GM12878 (cell line): ENCODE measurements at regions of chr2 and their contacts with region 1.

Region 1: DNA sequence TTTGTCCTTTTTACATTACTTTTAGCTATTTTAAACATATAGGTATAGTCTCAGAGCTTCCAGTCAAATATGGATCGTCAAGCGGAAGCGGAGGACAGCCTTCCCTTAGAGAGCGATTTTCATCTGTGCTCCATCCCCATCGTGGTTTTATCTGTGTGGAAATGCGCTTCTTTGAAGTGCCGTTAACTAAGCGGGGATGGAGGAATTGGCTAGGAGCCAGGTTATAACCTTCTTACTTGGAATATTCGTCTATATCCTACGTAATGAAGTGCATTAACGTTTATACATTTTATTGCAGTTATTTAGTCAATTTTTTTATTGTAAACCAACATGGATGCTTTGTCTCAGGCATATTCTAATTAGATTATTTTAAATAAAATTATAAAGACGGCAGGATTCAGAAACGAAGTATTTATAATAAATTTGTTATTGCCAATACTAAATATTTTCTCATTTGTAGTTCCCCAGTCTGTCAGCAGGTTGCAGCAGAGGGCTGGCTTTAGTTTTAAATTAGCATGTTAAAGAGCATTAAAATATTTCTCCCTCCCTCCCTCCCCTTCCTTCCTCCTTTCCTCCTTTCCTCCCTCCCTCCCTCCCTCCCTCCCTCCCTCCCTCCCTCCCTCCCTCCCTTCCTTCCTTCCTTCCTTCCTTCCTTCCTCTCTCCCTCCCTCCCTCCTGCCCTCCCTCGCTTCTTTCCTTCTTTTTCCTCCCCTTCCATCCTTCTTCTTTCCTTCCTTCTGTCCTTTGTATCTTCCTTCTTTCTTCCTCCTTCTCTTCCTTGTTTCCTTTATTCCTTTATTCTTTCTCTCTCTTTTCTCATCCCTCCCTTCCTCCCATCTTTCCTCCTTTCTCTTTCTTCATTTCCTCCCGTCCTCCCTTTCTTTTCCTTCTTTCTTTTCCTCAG is 80.6 kb upstream of the DOCK10 start:
- DNase-seq: no peak
- ATAC-seq: peak; percentile 59
- H3K4me3 ChIP-seq: no peak overlapping the region
- H3K27ac ChIP-seq: no peak overlapping the region
- H3K4me1 ChIP-seq: no peaks in the 10 kb centered on the region
- H3K27me3 ChIP-seq: no peaks in the 10 kb centered on the region; a peak in 1 of 4 replicates
- CTCF ChIP-seq: peak; percentile 42 to 63 (median 57); a peak in 5 of 6 replicates
- EP300 ChIP-seq: no peak
- POLR2A ChIP-seq: no peak
- RAD21 ChIP-seq: peak; percentile 77

Region 2: DNA sequence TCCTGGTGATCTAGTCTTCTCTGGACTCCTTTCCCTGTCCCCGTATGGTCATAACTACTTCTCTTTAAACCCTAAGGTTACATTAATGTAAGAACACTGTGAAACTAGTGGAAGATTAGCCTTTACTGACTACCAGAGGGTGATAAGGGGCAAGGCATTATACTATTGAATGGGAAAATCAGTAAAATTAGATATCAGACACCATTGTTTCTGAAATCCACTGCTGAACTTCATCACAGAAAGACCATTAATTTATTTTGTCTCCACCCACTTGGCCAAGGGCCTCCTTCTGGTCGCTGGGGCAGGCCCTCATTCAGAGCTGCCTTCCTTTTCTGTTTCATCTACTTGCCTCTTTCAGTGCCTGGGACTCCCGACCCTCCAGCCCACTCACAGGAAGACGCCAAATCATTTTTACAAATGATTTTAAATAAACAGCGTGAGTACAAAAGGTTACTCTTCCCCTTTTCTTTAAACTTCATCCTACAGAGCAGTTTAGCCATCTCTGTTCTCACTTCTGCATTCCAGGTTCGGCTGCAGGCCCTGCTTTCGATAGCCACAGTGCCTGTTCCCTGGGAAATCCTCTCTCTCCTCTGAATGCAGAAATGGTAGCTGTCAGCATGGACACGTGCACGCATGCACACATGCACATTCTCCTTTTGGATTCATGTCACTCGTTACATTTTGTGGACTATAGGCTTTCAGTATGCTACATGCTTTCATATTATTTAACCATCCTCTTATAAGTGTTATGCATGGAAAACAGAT is 10.3 kb before region 1 on chr2:
- CTCF ChIA-PET with region 1: interaction called, 15 read pairs
- POLR2A ChIA-PET with region 1: no interaction called
- RAD21 ChIA-PET with region 1: no interaction called
- SMC1A ChIA-PET with region 1: interaction called, 5 read pairs
- in situ Hi-C with region 1: no loop called
- intact Hi-C with region 1: no loop called
- DNase-seq: peak; percentile 13
- ATAC-seq: peak; percentile 86
- H3K4me3 ChIP-seq: no peak overlapping the region
- H3K27ac ChIP-seq: no peak overlapping the region
- H3K4me1 ChIP-seq: peaks cover 9% of the 10 kb centered on the region
- H3K27me3 ChIP-seq: no peaks in the 10 kb centered on the region
- CTCF ChIP-seq: no peak
- EP300 ChIP-seq: 0 out of 4 replicates have a peak, but pooled peaks of 1 of the 2 experiments have one; percentile 22
- POLR2A ChIP-seq: no peak
- RAD21 ChIP-seq: no peak

Region 3: GRCh38 chr2:225182126-225182525 is 59.3 kb after region 1 on chr2:
- CTCF ChIA-PET with region 1: no interaction called
- POLR2A ChIA-PET with region 1: no interaction called
- RAD21 ChIA-PET with region 1: no interaction called
- SMC1A ChIA-PET with region 1: no interaction called
- in situ Hi-C with region 1: no loop called
- intact Hi-C with region 1: no loop called
- DNase-seq: no peak
- ATAC-seq: no peak
- H3K4me3 ChIP-seq: no peak overlapping the region
- H3K27ac ChIP-seq: no peak overlapping the region
- H3K4me1 ChIP-seq: no peaks in the 10 kb centered on the region
- H3K27me3 ChIP-seq: no peaks in the 10 kb centered on the region
- CTCF ChIP-seq: no peak
- EP300 ChIP-seq: no peak
- POLR2A ChIP-seq: no peak
- RAD21 ChIP-seq: no peak

Region 4: GRCh38 chr2:225411452-225411851 is 288.6 kb after region 1 on chr2:
- CTCF ChIA-PET with region 1: interaction called, 3 read pairs
- POLR2A ChIA-PET with region 1: no interaction called
- RAD21 ChIA-PET with region 1: no interaction called
- SMC1A ChIA-PET with region 1: interaction called, 3 read pairs
- in situ Hi-C with region 1: no loop called
- intact Hi-C with region 1: loop called (anchors 5 kb)
- DNase-seq: no peak
- ATAC-seq: no peak
- H3K4me3 ChIP-seq: no peak overlapping the region
- H3K27ac ChIP-seq: no peak overlapping the region
- H3K4me1 ChIP-seq: no peaks in the 10 kb centered on the region
- H3K27me3 ChIP-seq: no peaks in the 10 kb centered on the region; a peak in 1 of 4 replicates
- CTCF ChIP-seq: no peak
- EP300 ChIP-seq: no peak
- POLR2A ChIP-seq: no peak
- RAD21 ChIP-seq: no peak

Region 5: GRCh38 chr2:225494100-225494459 is 371.2 kb after region 1 on chr2:
- CTCF ChIA-PET with region 1: interaction called, 3 read pairs
- POLR2A ChIA-PET with region 1: no interaction called
- RAD21 ChIA-PET with region 1: no interaction called
- SMC1A ChIA-PET with region 1: no interaction called
- in situ Hi-C with region 1: no loop called
- intact Hi-C with region 1: loop called (anchors 10 kb)
- DNase-seq: no peak
- ATAC-seq: no peak
- H3K4me3 ChIP-seq: no peak overlapping the region
- H3K27ac ChIP-seq: no peak overlapping the region
- H3K4me1 ChIP-seq: no peaks in the 10 kb centered on the region
- H3K27me3 ChIP-seq: no peaks in the 10 kb centered on the region
- CTCF ChIP-seq: no peak
- EP300 ChIP-seq: no peak
- POLR2A ChIP-seq: no peak
- RAD21 ChIP-seq: no peak

Region 6: DNA sequence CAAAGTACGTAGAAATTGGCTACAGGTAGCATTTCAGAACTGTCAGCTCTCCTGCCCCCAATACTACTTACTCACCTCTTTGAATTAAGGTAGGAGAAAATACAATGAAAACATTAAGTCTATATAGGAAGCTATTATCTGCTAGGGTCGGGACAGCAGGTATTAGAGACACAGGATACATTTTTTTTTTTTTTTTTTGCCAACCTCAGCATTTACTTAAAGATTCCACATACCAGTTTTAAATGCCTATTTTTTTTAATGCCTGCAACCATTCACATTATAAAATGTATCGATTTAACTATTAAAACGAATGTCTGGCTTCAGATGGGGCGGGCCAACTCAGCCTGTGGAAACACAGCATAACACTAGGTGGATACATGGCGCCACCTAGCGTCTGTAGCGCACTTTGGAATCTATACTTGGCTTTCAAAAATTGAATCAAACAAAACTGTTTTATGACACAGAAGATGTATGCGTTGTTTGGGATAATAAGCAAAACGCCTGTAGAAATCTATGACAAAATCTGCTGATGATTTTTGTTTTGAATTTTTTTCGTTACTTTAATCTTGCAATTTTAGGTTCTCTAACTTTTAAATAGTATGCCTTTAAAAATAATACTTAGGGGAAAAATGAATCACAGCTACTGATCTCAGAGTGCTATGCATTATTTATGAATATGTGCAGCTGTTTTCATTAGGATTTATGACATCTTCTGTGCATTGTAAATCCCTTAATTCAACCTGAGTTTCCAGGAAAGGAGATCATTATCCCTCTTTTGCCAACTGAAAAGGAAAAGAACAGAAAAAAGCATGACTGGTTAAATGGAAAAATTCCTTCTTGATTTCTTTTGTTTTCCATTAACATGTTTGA is 537.7 kb after region 1 on chr2:
- CTCF ChIA-PET with region 1: interaction called, 59 read pairs
- POLR2A ChIA-PET with region 1: no interaction called
- RAD21 ChIA-PET with region 1: interaction called, 5 read pairs
- SMC1A ChIA-PET with region 1: interaction called, 28 read pairs
- in situ Hi-C with region 1: loop called (anchors 5 kb)
- intact Hi-C with region 1: loop called (anchors 1 kb)
- DNase-seq: peak; percentile 9
- ATAC-seq: peak; percentile 95
- H3K4me3 ChIP-seq: no peak overlapping the region
- H3K27ac ChIP-seq: no peak overlapping the region
- H3K4me1 ChIP-seq: no peaks in the 10 kb centered on the region
- H3K27me3 ChIP-seq: no peaks in the 10 kb centered on the region
- CTCF ChIP-seq: peak; percentile 85 to 90 (median 86)
- EP300 ChIP-seq: no peak
- POLR2A ChIP-seq: no peak
- RAD21 ChIP-seq: peak; percentile 94